Aorta (tissue), 5 donors: ENCODE measurements at regions of chr3 and their contacts with region 1.

Region 1: DNA sequence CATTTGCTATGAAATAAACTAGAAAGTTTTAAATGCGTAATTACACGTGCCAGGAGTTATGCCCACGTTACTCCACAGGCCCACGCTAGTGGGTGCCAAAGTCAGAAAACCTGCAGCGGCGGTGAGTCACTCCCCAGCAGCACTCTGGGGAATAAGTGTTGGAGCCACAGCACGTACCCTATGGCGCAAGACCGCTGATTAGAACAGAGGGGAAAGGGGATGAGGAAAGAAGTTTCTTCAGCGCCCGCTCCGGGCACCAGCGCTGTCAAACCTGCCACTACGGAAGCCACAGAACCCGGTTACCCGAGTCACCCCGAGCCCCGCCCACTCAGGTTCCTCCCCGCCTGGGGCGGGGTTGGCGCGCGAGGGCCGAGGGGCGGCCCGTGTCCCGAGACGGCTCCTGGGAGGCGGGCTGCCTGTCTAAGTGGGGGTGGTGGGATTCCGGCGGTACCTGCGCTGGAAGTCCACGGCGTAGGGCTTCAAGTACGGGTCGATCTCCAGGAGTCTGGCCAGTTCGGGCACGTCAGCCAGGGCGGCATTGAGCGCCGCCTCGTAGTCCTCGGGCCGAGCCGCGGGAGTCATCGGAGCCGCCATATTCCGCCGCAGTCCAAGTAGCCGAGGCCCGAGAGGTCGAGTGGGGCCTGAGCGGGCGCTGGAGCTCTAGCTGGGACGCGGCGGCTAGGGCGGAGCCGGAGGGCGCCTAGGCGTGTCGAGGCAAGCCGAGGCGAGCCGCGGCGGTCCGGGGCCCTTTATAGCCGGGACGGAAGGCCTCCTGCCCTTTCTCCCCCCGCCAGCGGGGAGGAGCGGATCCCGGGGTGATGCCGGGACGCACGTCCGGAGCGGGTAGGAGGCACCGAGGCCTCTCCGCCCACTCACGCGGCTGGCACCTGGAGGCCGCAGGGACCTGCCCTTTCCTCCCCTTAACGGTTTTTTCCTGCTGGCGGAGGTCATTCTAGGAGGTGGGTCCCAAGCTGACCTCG is at the start of gene GBE1:
- DNase-seq: peak; percentile 96
- ATAC-seq: peak; percentile 97
- H3K4me3 ChIP-seq: peak within 1 kb of the TSS; percentile 76 to 89
- H3K27ac ChIP-seq: peak within 1 kb of the TSS; percentile 80 to 98
- H3K4me1 ChIP-seq: peaks cover 4 to 6% of the 10 kb centered on the region in 2 donors
- H3K27me3 ChIP-seq: no peaks in the 10 kb centered on the region
- total RNA-seq, gene GBE1: 64.0 to 103 TPM

Region 2: GRCh38 chr3:81554388-81554787 is 206.8 kb before region 1 on chr3:
- intact Hi-C with region 1: loop called in 1 of 2 experiments (anchors 10 kb)
- DNase-seq: no peak
- ATAC-seq: no peak
- H3K4me3 ChIP-seq: no peak overlapping the region
- H3K27ac ChIP-seq: peak overlapping the region in 1 of 2 donors; percentile 59
- H3K4me1 ChIP-seq: peaks cover 0 to 2% of the 10 kb centered on the region in 2 donors
- H3K27me3 ChIP-seq: no peaks in the 10 kb centered on the region

Region 3: GRCh38 chr3:81624756-81625155 is 136.5 kb before region 1 on chr3:
- intact Hi-C with region 1: no loop called
- DNase-seq: no peak
- ATAC-seq: no peak
- H3K4me3 ChIP-seq: no peak overlapping the region
- H3K27ac ChIP-seq: no peak overlapping the region
- H3K4me1 ChIP-seq: peaks cover 2 to 8% of the 10 kb centered on the region in 2 donors
- H3K27me3 ChIP-seq: no peaks in the 10 kb centered on the region

Region 4: GRCh38 chr3:81666493-81667121 is 94.6 kb before region 1 on chr3:
- intact Hi-C with region 1: loop called in 1 of 2 experiments (anchors 10 kb)
- DNase-seq: no peak
- ATAC-seq: no peak
- H3K4me3 ChIP-seq: no peak overlapping the region
- H3K27ac ChIP-seq: no peak overlapping the region
- H3K4me1 ChIP-seq: no peaks in the 10 kb centered on the region
- H3K27me3 ChIP-seq: no peaks in the 10 kb centered on the region

Region 5: GRCh38 chr3:81743096-81744025 is 17.9 kb before region 1 on chr3:
- intact Hi-C with region 1: loop called in 1 of 2 experiments (anchors 2 kb)
- DNase-seq: no peak
- ATAC-seq: peak; percentile 81
- H3K4me3 ChIP-seq: no peak overlapping the region
- H3K27ac ChIP-seq: peak overlapping the region; percentile 59 to 98
- H3K4me1 ChIP-seq: peaks cover 1 to 6% of the 10 kb centered on the region in 2 donors
- H3K27me3 ChIP-seq: no peaks in the 10 kb centered on the region